ENCODE measurements at regions of chr17 and their contacts with region 1.

Region 1: GRCh38 chr17:38735161-38735997 is 5.2 kb downstream of the CISD3 start:
- DNase-seq: peak in 2 of 4 donors; percentile 53 to 88
- ATAC-seq: peak; percentile 15
- H3K4me3 ChIP-seq: no peak overlapping the region
- H3K27ac ChIP-seq: no peak overlapping the region
- H3K4me1 ChIP-seq: peaks cover 18 to 28% of the 10 kb centered on the region in 2 donors
- H3K27me3 ChIP-seq: no peaks in the 10 kb centered on the region
- CTCF ChIP-seq: peak; percentile 85 to 87

Region 2: GRCh38 chr17:38605888-38606645 is 129.3 kb before region 1 on chr17 and contains the start of gene SRCIN1:
- intact Hi-C with region 1: no loop called
- DNase-seq: peak; percentile 40 to 83 (median 50)
- ATAC-seq: peak; percentile 72
- H3K4me3 ChIP-seq: peak within 1 kb of the TSS; percentile 33 to 49
- H3K27ac ChIP-seq: no peak within 1 kb of the TSS
- H3K4me1 ChIP-seq: peaks cover 5 to 11% of the 10 kb centered on the region in 2 donors
- H3K27me3 ChIP-seq: peaks cover 43 to 97% of the 10 kb centered on the region in 2 donors
- CTCF ChIP-seq: peak; percentile 70 to 82
- polyA plus RNA-seq, gene SRCIN1: 5.6 to 10.6 (median 8.5) TPM

Region 3: GRCh38 chr17:38617011-38617867 is 118.1 kb before region 1 on chr17:
- intact Hi-C with region 1: no loop called
- DNase-seq: no peak
- ATAC-seq: no peak
- H3K4me3 ChIP-seq: no peak overlapping the region
- H3K27ac ChIP-seq: no peak overlapping the region
- H3K4me1 ChIP-seq: no peaks in the 10 kb centered on the region
- H3K27me3 ChIP-seq: peaks cover 0 to 77% of the 10 kb centered on the region in 2 donors
- CTCF ChIP-seq: no peak

Region 4: GRCh38 chr17:38674749-38675615 is 60.4 kb before region 1 on chr17 and contains the start of gene EPOP:
- intact Hi-C with region 1: loop called in 1 of 2 experiments (anchors 5 kb)
- DNase-seq: peak; percentile 56 to 95 (median 88)
- ATAC-seq: peak; percentile 93
- H3K4me3 ChIP-seq: peak within 1 kb of the TSS; percentile 49 to 66
- H3K27ac ChIP-seq: no peak within 1 kb of the TSS
- H3K4me1 ChIP-seq: peaks cover 15 to 47% of the 10 kb centered on the region in 2 donors
- H3K27me3 ChIP-seq: peaks cover 39 to 63% of the 10 kb centered on the region in 2 donors
- CTCF ChIP-seq: no peak
- polyA plus RNA-seq, gene EPOP: 1.6 to 2.1 (median 1.7) TPM

Region 5: GRCh38 chr17:38809828-38810227 is 74.4 kb after region 1 on chr17:
- intact Hi-C with region 1: no loop called
- DNase-seq: no peak
- ATAC-seq: no peak
- H3K4me3 ChIP-seq: no peak overlapping the region
- H3K27ac ChIP-seq: no peak overlapping the region
- H3K4me1 ChIP-seq: no peaks in the 10 kb centered on the region
- H3K27me3 ChIP-seq: no peaks in the 10 kb centered on the region
- CTCF ChIP-seq: no peak